ENCODE measurements at regions of chr3 and their contacts with region 1.

Region 1: DNA sequence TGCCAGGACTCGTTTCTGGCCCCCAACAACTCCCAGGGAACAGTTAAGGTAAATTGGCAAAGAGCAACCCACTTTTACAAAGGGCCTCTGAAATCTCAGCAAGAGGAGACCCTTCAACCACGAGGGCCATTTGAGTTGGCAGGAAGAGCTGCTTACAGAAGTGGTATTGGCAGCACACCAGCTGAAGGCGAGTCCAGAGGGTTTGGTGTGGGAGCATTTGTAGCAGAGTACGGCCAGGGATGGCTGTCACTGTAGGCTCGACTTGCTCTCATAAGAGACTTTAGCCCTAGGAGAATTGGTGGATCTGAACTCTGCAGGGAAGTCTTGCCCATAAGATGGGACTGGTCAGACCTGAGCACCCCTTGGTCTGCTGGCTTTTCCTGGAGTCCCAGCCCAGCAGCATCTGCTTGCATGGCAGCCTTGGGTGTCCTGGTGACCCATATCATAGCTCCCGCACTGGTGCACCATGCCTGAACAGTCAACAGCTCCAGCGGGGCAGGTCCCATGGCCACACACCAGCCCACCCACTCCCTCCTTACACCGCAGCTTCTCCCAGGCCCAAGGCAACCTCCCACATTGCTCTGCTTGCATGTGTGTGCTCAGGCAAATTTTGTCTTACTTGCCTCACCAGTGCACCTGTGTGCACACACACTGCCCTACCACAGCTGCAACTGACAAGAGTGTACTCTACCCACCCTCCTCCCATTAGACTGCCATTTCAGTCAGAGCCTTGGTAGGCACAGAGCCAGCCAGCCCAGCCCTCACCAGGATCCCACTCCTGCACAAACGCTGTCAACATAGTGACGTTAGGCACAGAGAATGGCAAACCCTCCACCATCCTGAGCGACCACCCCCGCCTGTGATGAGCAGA is 861.6 kb upstream of the DPPA4 start:
- DNase-seq: peak; percentile 16

Region 2: DNA sequence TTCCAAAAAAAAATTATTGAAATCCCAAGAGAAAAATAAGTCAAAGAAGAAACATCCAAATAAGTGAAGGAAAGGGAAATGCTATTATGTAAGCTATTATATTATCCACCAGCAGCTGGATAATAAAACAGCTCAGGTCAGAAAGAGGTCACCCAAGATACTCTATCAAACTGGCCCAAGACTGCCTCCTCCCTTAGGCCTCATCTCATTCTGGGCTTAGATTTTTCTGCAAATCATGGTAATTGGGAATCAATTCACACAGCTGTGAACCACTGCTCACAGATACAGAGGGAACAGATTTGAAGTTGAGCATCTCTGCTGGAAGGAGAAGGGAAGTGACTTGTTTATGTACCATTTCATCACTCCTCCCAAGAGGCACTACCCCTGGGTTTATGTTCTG is 567.1 kb before region 1 on chr3:
- intact Hi-C with region 1: loop called in 1 of 2 experiments (anchors 5 kb)
- DNase-seq: no peak

Region 3: GRCh38 chr3:110062716-110063115 is 136.2 kb before region 1 on chr3:
- intact Hi-C with region 1: no loop called
- DNase-seq: no peak

Region 4: GRCh38 chr3:110378481-110378880 is 179.5 kb after region 1 on chr3:
- intact Hi-C with region 1: no loop called
- DNase-seq: no peak